Ovary (tissue), 10 donors: ENCODE measurements at regions of chr12 and their contacts with region 1.

Region 1: GRCh38 chr12:9049520-9050133 is 60.3 kb downstream of the KLRG1 start:
- DNase-seq: no peak
- H3K4me3 ChIP-seq: no peak overlapping the region
- H3K27ac ChIP-seq: no peak overlapping the region
- H3K4me1 ChIP-seq: no peaks in the 10 kb centered on the region
- H3K27me3 ChIP-seq: no peaks in the 10 kb centered on the region
- CTCF ChIP-seq: peak in 2 of 3 donors; percentile 9 to 30
- EP300 ChIP-seq: no peak
- POLR2A ChIP-seq: no peak

Region 2: DNA sequence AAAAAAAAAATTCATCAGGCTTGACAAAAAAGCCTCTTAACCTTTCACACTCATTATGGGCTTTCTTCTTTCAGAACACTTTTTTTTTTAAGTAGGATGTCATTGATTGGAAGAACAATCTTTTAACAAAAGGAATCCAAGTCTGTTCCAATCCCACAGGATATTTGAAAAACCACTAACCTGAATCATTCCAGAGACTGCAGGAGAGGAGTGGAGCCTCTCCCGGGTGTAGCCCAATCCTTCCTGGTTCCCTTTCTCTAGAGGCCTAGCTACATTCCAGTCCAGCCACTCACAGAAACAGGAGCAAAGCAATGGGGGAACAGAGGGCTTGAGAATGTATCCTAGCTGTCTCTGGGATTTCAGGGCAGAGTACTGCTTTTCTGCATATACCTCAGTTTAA is 391.3 kb before region 1 on chr12:
- intact Hi-C with region 1: loop called in 1 of 4 experiments (anchors 10 kb)
- DNase-seq: no peak
- H3K4me3 ChIP-seq: no peak overlapping the region
- H3K27ac ChIP-seq: no peak overlapping the region
- H3K4me1 ChIP-seq: no peaks in the 10 kb centered on the region
- H3K27me3 ChIP-seq: no peaks in the 10 kb centered on the region
- CTCF ChIP-seq: no peak
- EP300 ChIP-seq: no peak
- POLR2A ChIP-seq: no peak